Activated B cell treated with CpG ODN at 0.5 μM for 24 hours (primary cell): ENCODE measurements at regions of chr11 and their contacts with region 1.

Region 1: DNA sequence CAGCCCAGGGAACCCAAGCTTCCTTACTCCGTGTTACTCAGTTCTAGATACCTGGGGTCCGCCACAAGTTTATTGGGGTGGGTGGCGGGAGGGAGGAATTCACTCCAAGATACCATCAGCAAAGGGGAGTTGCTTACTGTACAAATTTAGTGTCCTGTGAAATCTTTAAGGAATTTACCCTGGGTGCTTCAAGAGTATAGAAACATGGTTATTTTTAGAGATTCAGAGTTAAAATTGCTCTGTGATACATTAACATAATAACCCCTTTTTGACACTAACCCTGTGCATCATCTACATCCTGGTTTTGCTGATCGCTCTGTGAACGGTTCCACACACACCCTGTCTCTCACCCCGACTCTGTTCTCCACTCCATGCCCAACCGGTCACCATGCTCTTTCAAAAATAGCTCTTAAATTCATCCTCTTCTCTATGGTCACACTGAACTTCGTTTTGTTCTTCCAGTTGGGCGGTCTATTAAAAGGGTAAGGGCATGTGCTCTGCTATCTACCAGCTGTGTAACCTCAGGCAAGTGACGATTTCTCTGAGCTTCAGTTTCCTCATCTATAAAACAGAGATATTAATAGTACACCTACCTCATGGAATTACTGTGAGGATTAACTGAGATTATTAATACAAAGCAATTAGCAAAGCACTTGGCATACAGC is 19.1 kb upstream of the LYVE1 start:
- DNase-seq: no peak
- ATAC-seq: no peak
- H3K4me3 Mint-ChIP-seq: no peak overlapping the region
- H3K27ac Mint-ChIP-seq: no peak overlapping the region
- H3K4me1 Mint-ChIP-seq: peaks cover 33% of the 10 kb centered on the region
- H3K27me3 Mint-ChIP-seq: no peaks in the 10 kb centered on the region
- CTCF ChIP-seq: no peak

Region 2: GRCh38 chr11:10526974-10527918 is 60.3 kb before region 1 on chr11:
- CTCF ChIA-PET with region 1: no interaction called
- POLR2A ChIA-PET with region 1: no interaction called
- intact Hi-C with region 1: no loop called
- DNase-seq: no peak
- ATAC-seq: peak; percentile 95
- H3K4me3 Mint-ChIP-seq: peak overlapping the region; percentile 21
- H3K27ac Mint-ChIP-seq: peak overlapping the region; percentile 77
- H3K4me1 Mint-ChIP-seq: peaks cover 21% of the 10 kb centered on the region
- H3K27me3 Mint-ChIP-seq: no peaks in the 10 kb centered on the region
- CTCF ChIP-seq: no peak

Region 3: DNA sequence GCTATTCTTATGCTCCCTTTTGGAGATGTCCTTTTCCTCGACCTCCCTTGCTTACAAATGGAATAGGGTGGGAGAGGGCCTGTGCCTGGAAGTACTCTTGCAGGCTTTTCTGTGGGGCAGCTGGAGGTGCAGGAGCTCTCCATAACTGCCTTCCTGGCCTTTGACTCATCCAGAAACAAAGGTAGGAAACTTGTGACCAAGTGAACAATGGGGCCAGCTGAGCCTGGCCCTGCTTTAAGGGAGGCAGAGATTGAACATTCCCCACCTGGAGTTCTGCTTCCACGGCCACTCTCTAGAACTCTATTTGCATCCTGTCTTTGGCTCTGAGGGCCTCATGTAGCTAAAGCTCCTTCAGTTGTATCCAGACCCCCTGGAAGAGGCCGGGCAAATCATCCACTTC is 14.0 kb before region 1 on chr11:
- CTCF ChIA-PET with region 1: no interaction called
- POLR2A ChIA-PET with region 1: no interaction called
- intact Hi-C with region 1: loop called (anchors 2 kb)
- DNase-seq: no peak
- ATAC-seq: no peak
- H3K4me3 Mint-ChIP-seq: no peak overlapping the region
- H3K27ac Mint-ChIP-seq: no peak overlapping the region
- H3K4me1 Mint-ChIP-seq: peaks cover 64% of the 10 kb centered on the region
- H3K27me3 Mint-ChIP-seq: no peaks in the 10 kb centered on the region
- CTCF ChIP-seq: no peak